Esophagus muscularis mucosa (tissue), 4 donors: ENCODE measurements at regions of chr1 and their contacts with region 1.

Region 1: GRCh38 chr1:20194757-20195461 is 8.6 kb upstream of the PLA2G2C start:
- DNase-seq: no peak
- H3K4me3 ChIP-seq: no peak overlapping the region
- H3K27ac ChIP-seq: peak overlapping the region in 1 of 4 donors; percentile 25
- H3K4me1 ChIP-seq: peaks cover 7 to 57% (median 55%) of the 10 kb centered on the region in 4 donors
- H3K27me3 ChIP-seq: no peaks in the 10 kb centered on the region
- CTCF ChIP-seq: peak; percentile 66 to 85 (median 80)
- EP300 ChIP-seq: no peak
- POLR2A ChIP-seq: no peak

Region 2: GRCh38 chr1:19918057-19918456 is 276.9 kb before region 1 on chr1:
- intact Hi-C with region 1: loop called (anchors 5 kb)
- DNase-seq: no peak
- H3K4me3 ChIP-seq: no peak overlapping the region
- H3K27ac ChIP-seq: no peak overlapping the region
- H3K4me1 ChIP-seq: peaks cover 0 to 6% (median 2%) of the 10 kb centered on the region in 4 donors
- H3K27me3 ChIP-seq: peaks cover 0 to 3% (median 0%) of the 10 kb centered on the region in 4 donors
- CTCF ChIP-seq: peak; percentile 88 to 89 (median 88)
- EP300 ChIP-seq: no peak
- POLR2A ChIP-seq: no peak

Region 3: DNA sequence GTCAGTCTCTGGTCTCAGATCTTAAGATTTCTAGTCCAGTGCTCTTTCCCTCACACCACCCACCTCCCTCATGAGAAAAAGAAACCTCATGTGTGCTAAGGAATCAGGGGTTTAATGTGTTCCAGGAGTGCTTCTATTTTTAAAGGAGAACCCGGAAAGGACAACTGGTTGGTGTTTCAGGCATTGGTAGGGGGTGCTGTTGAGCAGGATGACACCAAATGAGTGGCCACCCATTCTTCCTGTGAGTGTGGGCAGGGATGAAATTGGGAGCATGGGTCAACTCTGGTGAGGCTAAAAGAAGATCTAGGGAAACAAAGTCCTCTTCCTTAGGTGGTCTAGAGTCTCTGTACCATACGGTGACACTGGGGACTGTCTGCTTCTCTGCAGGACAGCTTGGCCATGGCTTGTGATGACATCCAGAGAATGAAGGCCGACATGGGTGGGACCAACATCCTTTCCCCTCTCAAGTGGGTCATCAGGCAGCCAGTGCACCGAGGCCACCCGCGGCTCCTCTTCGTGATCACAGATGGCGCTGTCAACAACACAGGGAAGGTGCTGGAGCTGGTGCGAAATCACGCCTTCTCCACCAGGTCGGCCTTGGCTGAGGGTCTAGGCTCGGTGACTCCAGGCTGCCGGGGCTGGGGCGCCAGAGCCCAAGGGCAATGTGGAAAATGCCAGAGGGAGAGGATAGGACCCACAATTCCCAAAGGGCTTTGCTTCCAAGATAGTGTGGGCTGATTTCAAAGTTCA is 135.1 kb after region 1 on chr1:
- intact Hi-C with region 1: no loop called
- DNase-seq: no peak
- H3K4me3 ChIP-seq: no peak overlapping the region
- H3K27ac ChIP-seq: no peak overlapping the region
- H3K4me1 ChIP-seq: peaks cover 9 to 15% (median 14%) of the 10 kb centered on the region in 4 donors
- H3K27me3 ChIP-seq: peaks cover 0 to 27% (median 0%) of the 10 kb centered on the region in 4 donors
- CTCF ChIP-seq: no peak
- EP300 ChIP-seq: no peak
- POLR2A ChIP-seq: no peak